CD8-positive, alpha-beta T cell (primary cell): ENCODE measurements at regions of chr6 and their contacts with region 1.

Region 1: DNA sequence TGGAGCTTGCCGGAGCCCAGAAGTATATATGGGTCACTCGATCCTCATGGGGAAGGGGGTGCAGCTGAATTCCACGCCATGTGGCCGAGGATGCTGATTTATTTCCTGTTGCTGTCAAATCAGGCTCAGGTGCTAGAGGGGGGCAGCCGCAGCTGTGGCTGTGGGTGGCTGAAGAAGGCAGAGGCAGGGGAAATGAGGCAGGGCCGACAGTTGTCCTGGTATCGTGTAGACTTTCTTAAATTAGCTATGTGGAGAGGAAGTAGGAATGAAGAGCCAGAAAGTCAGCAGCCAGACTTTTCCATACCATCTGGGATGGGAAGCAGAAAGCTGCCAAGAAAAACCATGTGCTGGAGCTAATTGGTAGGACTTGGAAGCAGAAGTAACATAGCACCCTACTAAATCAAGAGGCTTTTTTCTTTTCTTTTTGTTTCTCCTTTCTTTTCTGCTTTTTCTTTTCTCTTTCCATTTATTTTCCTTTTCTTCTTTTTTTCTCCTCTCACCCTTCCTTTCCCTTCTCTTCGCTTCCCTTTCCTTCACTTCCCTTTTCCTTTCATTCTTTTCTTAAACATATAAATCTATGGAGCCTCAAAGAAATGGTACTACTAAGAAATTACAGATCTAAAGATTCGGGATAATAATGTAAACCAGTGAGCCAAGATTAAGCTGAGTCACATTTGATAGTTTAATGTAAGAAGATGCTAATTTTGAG is 90.6 kb upstream of the CD83 start:
- DNase-seq: no peak
- ATAC-seq: no peak
- H3K4me3 ChIP-seq: no peak overlapping the region
- H3K4me3 Mint-ChIP-seq: no peak overlapping the region
- H3K27ac ChIP-seq: no peak overlapping the region
- H3K27ac Mint-ChIP-seq: no peak overlapping the region
- H3K4me1 ChIP-seq: no peaks in the 10 kb centered on the region
- H3K4me1 Mint-ChIP-seq: no peaks in the 10 kb centered on the region
- H3K27me3 ChIP-seq: no peaks in the 10 kb centered on the region
- H3K27me3 Mint-ChIP-seq: peaks cover 31% of the 10 kb centered on the region
- CTCF ChIP-seq: no peak

Region 2: DNA sequence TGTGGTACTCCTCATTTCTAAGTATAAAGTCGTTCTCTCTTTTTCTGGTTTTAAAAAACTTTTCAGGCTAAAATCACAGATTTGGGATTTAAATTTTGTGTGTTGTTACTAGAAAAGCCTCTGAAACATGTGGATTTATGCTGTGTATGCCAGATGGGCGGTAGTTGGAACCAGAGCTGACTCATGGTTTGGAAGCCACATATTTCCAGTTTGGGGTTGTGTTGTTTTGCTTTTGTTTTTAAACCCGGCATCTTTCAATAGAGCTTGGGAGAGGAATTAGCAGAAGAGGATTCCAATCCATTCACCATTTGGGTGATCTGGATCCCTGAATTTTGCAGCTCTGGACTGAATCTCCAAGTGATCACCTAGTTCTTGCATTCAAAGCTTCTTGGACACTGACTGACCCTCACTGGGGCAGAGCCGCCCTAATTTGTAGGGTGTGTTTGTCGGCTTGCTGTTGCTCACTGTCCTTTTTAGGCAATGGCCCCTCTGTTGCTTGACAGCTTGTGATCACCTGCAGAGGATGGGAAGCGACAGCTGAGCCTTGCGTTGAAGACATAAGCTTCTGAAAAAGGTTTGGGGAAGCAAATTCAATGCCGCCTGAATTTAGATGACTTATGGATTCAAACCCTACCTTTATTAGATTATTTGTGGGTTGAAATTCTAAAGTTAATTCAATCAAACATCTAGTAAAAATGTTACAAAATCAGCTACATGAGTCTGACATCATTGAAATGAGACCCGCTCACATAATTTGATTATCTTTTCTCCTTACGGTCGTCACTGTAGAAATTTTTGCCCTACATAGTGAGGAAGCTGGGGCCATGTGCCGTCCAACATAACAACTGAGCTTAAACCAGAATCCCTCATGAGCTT is 10.7 kb after region 1 on chr6:
- CTCF ChIA-PET with region 1: interaction called, 12 read pairs
- POLR2A ChIA-PET with region 1: no interaction called
- intact Hi-C with region 1: no loop called
- DNase-seq: no peak
- ATAC-seq: no peak
- H3K4me3 ChIP-seq: no peak overlapping the region
- H3K4me3 Mint-ChIP-seq: no peak overlapping the region
- H3K27ac ChIP-seq: no peak overlapping the region
- H3K27ac Mint-ChIP-seq: no peak overlapping the region
- H3K4me1 ChIP-seq: no peaks in the 10 kb centered on the region
- H3K4me1 Mint-ChIP-seq: no peaks in the 10 kb centered on the region
- H3K27me3 ChIP-seq: peaks cover 3% of the 10 kb centered on the region in 2 experiments
- H3K27me3 Mint-ChIP-seq: peaks cover 19% of the 10 kb centered on the region
- CTCF ChIP-seq: no peak